Left cardiac atrium (tissue), 4 donors: ENCODE measurements at regions of chr20 and their contacts with region 1.

Region 1: GRCh38 chr20:19661717-19662636 is 96.1 kb upstream of the RIN2 start:
- DNase-seq: peak; percentile 49
- ATAC-seq: peak; percentile 79 to 86

Region 2: DNA sequence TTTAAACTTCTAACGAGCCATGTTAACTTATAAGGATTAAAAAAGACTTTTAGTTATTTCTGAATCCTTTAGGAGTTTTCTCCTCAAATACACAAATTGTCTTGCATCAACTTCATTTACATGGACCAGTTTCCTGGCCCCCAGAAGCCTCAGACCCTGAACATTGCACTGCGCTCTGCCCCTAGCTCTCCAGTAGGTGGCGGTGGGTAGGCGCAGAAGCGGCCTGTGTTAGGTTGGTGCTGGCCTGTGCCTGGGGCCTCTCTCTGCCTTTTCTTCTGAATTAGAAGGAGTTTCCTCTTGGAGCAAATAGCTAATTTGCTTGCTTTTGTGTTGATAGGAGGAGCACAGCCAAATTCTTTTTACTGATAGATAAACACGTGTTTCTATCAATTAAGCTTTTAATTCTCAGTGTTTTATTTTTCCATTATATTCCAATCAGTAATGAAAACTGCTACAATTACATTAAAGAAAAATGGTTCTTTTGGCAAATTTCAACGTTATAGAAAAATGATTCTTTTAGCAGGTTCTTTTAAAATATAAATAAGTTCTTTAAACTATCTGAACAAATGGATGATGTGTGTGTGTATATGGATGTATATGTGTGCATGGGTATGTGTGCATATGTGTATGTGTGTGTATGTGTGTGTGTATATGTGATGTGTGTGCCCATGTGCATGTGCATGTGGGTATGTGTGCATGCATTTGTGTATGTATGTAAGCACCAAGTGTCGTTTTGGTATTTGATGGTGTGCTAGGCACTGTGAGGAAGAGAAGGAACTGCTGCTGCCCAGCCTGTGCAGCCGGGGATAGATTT is 1029.6 kb before region 1 on chr20:
- intact Hi-C with region 1: loop called (anchors 2 to 5 kb)
- DNase-seq: peak; percentile 65
- ATAC-seq: peak; percentile 87 to 94

Region 3: GRCh38 chr20:19205977-19206396 is 456.0 kb before region 1 on chr20:
- intact Hi-C with region 1: loop called (anchors 2 to 5 kb)
- DNase-seq: peak; percentile 68
- ATAC-seq: peak; percentile 54 to 74

Region 4: GRCh38 chr20:19571996-19572395 is 90.0 kb before region 1 on chr20:
- intact Hi-C with region 1: no loop called
- DNase-seq: no peak
- ATAC-seq: no peak

Region 5: DNA sequence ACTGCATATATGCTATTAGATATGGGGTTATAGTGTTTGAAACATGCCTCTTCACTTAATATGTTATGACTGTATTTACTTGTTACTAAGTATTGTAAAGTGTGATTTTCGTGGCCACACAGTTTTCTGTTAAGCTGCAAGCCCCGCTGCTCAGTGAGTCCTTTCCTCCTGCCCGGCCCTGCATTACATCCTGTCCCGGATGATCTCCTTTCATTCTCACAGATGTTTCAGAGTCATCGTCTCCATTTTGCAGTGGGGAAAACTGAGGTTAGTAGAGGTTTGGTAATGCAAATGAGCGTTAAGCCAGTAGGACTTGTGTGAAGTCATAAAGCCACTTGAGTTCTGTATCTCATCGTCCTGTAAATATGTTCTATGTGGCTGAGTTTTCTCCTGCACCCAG is 545.9 kb after region 1 on chr20:
- intact Hi-C with region 1: no loop called
- DNase-seq: no peak
- ATAC-seq: no peak